Heart right ventricle (tissue), 16 donors: ENCODE measurements at regions of chr22 and their contacts with region 1.

Region 1: GRCh38 chr22:31211862-31212730 is at the start of gene LIMK2:
- DNase-seq: peak; percentile 94 to 96
- ATAC-seq: peak; percentile 93 to 97 (median 95)
- H3K4me3 ChIP-seq: peak within 1 kb of the TSS; percentile 70 to 95 (median 82)
- H3K27ac ChIP-seq: peak within 1 kb of the TSS; percentile 76 to 98 (median 88)
- H3K4me1 ChIP-seq: peaks cover 8 to 70% (median 46%) of the 10 kb centered on the region in 9 donors
- H3K27me3 ChIP-seq: no peaks in the 10 kb centered on the region
- CTCF ChIP-seq: peak; percentile 74 to 98 (median 87)
- total RNA-seq, gene LIMK2: 6.5 to 18.8 (median 9.7) TPM

Region 2: GRCh38 chr22:31055635-31056159 is 156.4 kb before region 1 on chr22:
- intact Hi-C with region 1: no loop called
- DNase-seq: peak; percentile 79 to 82
- ATAC-seq: peak; percentile 84 to 97 (median 92)
- H3K4me3 ChIP-seq: no peak overlapping the region
- H3K27ac ChIP-seq: peak overlapping the region; percentile 17 to 84 (median 78)
- H3K4me1 ChIP-seq: peaks cover 4 to 46% (median 15%) of the 10 kb centered on the region in 9 donors
- H3K27me3 ChIP-seq: no peaks in the 10 kb centered on the region
- CTCF ChIP-seq: no peak

Region 3: DNA sequence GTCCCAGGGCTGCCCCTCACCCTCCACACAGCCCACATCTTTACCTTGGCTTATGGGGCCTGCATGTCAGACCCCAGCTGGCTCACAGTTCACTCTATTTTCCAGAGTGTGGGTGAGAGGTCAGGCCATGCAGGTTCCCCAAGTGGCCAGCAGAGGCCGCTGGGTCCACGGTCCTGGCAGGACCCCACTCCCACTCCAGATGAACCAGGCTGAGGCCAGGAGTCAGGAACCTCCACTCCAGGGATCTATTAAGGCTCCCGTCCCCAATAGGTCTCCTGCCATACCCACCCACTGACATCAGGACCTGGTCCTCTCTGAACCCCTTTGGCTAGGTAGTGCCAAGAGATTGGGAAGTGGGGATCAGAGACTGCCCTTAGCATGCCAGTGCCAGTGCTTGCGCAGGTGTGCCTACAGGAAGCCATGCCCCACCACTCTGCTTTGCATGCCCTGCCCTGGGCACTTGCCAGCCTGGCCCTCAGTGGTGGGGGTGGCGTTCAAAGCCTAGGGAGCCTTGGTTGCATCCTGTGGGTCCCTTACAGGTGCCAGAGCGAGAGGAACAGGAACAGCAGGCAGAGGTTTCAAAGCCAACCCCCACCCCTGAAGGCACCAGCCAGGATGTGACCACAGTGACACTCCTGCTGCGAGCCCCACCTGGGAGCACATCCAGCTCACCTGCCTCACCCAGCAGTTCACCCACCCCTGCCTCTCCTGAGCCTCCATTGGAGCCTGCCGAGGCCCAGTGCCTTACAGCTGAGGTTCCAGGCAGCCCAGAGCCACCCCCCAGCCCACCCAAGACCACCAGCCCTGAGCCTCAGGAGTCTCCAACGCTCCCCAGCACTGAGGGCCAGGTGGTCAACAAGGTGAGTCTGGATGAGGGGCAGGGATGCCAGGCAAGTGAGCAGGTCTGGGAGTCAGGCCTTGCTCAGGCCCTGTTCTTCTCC is 122.7 kb before region 1 on chr22:
- intact Hi-C with region 1: loop called in 1 of 10 experiments (anchors 10 kb)
- DNase-seq: peak; percentile 5 to 71
- ATAC-seq: peak in 4 of 8 donors; percentile 7 to 22 (median 20)
- H3K4me3 ChIP-seq: no peak overlapping the region
- H3K27ac ChIP-seq: peak overlapping the region in 8 of 10 donors; percentile 24 to 65 (median 40)
- H3K4me1 ChIP-seq: peaks cover 3 to 80% (median 43%) of the 10 kb centered on the region in 9 donors
- H3K27me3 ChIP-seq: no peaks in the 10 kb centered on the region
- CTCF ChIP-seq: peak; percentile 69 to 89 (median 82)

Region 4: DNA sequence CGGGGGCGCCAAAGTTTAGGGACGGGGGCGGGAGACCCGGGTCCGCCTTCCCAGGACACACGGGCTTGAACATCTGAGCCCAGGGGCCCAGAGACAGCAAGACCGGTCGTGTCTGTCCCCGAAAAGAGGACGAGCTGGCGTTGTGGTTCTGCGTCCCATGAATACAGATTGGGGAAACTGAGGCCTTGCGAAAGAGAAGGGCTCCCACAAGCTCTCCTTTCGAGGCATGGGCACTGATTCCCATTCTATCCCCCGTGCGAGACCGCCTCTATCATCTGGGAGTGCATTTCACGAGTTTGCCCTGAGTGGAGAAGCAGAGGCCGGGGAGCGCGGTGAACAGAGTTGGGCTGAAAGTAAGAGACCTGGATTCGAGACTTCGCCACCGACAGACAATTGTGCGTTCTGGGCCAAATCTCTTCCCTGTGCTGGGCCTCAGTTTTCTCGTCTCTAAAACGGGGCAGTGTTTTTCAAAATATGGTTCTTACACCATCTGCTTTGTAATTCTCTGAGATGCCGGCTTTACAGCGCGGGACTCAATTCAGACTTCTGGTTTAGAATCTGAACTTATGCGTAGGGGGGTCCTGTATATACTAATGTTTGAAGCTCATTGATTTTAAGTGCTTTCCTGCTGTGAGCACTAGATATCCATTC is 51.6 kb before region 1 on chr22:
- intact Hi-C with region 1: loop called in 3 of 10 experiments (anchors 5 kb)
- DNase-seq: no peak
- ATAC-seq: peak; percentile 27 to 71 (median 58)
- H3K4me3 ChIP-seq: peak overlapping the region; percentile 59 to 95 (median 82)
- H3K27ac ChIP-seq: peak overlapping the region; percentile 47 to 95 (median 88)
- H3K4me1 ChIP-seq: peaks cover 2 to 43% (median 35%) of the 10 kb centered on the region in 9 donors
- H3K27me3 ChIP-seq: no peaks in the 10 kb centered on the region
- CTCF ChIP-seq: peak in 1 of 9 donors; percentile 2

Region 5: DNA sequence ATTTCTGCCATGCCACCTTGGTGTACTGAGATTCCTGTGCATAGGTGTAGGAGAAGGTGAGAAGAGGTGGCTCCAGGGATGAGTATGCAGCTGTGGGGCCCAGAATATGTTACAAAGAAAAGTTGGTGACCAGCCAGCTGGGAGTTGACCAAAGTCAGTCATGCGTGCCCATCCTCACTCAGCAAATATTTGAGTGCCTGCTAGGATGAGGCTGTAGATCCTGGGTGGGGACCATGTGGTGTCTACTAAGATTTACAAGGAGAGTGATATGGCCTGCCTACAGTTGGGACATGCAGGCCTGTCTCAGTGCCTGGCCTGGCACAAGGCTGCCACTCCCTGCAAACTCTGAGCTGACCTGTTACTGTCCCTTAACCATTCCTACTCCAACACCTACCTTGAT is 32.7 kb before region 1 on chr22:
- intact Hi-C with region 1: no loop called
- DNase-seq: no peak
- ATAC-seq: peak in 7 of 8 donors; percentile 12 to 72 (median 45)
- H3K4me3 ChIP-seq: no peak overlapping the region
- H3K27ac ChIP-seq: no peak overlapping the region
- H3K4me1 ChIP-seq: peaks cover 0 to 16% (median 7%) of the 10 kb centered on the region in 9 donors
- H3K27me3 ChIP-seq: no peaks in the 10 kb centered on the region
- CTCF ChIP-seq: no peak

Region 6: DNA sequence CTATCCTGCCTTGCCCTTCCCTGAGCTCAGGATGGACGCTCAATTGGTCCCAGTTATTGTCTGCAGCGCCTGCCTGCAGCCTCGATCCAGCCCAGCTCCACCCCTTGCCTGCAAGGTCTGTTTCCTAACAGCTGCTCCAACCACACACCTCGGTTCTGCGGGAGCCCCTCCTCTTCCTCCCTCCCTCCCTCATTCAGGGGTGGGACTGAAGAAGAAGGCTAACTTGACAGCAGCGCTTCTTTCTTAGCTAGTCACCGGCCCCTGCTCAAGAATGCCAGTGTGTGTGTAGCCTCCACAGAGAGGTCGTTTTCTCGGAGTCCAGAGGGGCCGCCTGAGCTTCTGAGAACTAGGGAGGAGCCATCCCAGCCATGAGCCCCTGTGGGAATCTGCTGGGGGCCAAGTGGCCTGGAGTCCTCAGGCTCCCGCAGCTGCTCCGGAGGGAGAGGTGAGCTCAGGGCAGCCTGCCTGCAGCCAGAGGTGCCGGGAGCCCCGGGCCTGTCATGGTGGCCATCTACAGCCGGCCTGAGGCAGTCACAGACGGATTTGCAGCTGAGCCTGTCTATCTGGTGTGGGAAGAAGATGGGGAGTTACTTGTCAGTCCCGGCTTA is 36.1 kb after region 1 on chr22:
- intact Hi-C with region 1: loop called in 1 of 10 experiments (anchors 5 kb)
- DNase-seq: peak; percentile 68 to 81
- ATAC-seq: peak; percentile 92 to 96 (median 96)
- H3K4me3 ChIP-seq: peak overlapping the region; percentile 18 to 67 (median 57)
- H3K27ac ChIP-seq: peak overlapping the region in 8 of 10 donors; percentile 29 to 79 (median 66)
- H3K4me1 ChIP-seq: peaks cover 16 to 65% (median 50%) of the 10 kb centered on the region in 9 donors
- H3K27me3 ChIP-seq: no peaks in the 10 kb centered on the region
- CTCF ChIP-seq: no peak

Region 7: DNA sequence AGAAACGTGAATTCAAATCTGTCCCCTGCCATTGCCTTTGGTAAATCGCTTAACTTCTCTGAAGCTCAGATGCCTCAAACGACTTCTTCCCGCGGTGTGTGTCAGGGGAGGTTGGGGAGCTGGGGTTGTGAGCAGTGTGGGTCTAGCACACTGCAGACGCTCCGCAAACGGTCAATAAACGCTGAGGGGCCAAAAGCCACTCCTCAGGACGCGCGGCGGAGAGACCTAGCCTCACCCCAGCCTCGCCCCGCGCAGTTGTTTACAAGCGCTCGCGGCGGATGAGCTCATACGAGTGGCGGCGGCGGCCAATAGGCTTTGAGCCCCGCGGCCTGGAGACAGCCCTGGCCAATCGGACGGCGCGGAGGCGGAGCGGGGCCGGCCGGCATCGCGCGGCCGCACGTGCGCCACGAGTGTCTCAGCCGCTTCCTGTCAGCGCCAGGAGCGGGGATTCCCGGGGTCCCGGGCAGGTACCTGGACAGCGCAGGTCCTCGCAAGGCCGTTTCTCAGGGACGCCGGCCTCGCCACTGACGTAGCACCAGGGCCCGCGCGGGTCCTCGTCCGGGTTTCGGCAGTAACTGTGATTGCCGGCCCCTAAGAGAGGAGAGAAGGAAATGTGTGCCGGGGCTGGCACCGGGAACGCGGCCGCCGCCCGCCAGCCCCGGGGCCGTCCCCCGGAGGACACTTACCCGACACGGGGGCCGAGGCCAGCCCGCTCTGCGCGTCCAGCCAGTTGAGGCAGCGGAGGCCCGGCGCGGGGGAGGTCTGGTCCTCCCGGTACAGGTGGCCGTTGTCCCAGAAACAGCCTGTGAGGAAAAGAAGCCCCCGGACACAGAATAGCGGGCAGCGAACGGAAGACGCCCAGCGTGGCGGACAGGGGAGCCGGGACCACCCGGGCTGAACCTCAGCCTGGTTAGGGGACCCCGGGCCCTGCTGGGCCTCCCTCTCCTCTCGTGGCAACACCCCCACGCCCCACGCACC is 78.7 kb after region 1 on chr22:
- intact Hi-C with region 1: loop called in 1 of 10 experiments (anchors 5 kb)
- DNase-seq: peak; percentile 94 to 96
- ATAC-seq: peak; percentile 93 to 96 (median 94)
- H3K4me3 ChIP-seq: peak overlapping the region; percentile 42 to 89 (median 78)
- H3K27ac ChIP-seq: peak overlapping the region; percentile 93 to 99 (median 95)
- H3K4me1 ChIP-seq: peaks cover 18 to 89% (median 52%) of the 10 kb centered on the region in 9 donors
- H3K27me3 ChIP-seq: no peaks in the 10 kb centered on the region
- CTCF ChIP-seq: no peak